ENCODE measurements at regions of chr6 and their contacts with region 1.

Region 1: DNA sequence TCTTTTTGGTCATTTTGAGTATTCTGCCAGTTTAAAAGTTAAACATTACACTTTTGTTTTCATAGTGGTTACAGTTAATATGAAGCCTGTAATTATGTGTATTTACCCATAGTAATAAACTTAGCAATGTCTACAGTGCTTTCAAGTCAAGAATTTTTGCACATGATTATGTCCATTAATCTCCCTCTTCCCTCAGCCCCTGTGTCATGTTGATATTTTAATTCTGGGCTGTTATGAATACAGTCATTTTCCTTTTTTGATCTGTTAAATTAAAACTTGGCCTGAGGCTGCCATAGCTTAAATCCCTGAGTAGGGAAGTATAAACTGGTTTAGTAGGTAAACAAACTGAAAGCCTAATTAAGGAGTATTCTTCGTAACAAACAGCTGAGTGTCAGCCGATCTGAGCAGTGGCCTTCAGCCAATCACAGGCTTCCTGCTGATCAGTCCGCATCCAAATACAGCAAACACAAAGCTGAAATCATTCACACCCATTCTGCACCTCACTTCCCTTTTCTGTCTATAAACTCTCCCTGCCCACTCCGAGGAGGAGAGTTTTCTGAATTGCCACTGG is 9.5 kb upstream of the SFT2D1 start:
- DNase-seq: no peak
- ATAC-seq: no peak

Region 2: GRCh38 chr6:165249808-165250207 is 1102.0 kb before region 1 on chr6:
- intact Hi-C with region 1: no loop called
- DNase-seq: no peak
- ATAC-seq: no peak

Region 3: DNA sequence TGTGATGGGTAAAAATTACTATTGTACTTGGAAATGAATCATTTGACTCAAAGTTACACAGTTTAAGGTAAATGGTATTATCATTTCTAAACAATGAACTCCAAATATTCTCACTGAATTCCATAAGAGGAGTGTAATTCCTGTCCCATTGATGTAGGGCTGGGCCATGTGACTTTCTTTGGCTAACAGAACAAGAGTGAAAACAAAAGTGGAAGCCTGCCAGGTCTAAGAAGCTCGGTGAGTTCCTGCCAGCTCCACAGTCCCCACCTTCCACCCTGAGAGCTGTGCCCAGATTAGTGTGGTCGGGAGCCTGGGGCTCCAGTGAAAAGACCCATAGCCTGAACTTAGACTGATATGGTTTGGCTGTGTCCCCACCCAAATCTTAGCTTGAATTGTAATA is 208.8 kb before region 1 on chr6:
- intact Hi-C with region 1: no loop called
- DNase-seq: no peak
- ATAC-seq: no peak

Region 4: GRCh38 chr6:166474721-166475565 is 123.1 kb after region 1 on chr6:
- intact Hi-C with region 1: loop called (anchors 10 kb)
- DNase-seq: peak; percentile 52
- ATAC-seq: peak; percentile 30